ENCODE measurements at regions of chr10 and their contacts with region 1.

Region 1: DNA sequence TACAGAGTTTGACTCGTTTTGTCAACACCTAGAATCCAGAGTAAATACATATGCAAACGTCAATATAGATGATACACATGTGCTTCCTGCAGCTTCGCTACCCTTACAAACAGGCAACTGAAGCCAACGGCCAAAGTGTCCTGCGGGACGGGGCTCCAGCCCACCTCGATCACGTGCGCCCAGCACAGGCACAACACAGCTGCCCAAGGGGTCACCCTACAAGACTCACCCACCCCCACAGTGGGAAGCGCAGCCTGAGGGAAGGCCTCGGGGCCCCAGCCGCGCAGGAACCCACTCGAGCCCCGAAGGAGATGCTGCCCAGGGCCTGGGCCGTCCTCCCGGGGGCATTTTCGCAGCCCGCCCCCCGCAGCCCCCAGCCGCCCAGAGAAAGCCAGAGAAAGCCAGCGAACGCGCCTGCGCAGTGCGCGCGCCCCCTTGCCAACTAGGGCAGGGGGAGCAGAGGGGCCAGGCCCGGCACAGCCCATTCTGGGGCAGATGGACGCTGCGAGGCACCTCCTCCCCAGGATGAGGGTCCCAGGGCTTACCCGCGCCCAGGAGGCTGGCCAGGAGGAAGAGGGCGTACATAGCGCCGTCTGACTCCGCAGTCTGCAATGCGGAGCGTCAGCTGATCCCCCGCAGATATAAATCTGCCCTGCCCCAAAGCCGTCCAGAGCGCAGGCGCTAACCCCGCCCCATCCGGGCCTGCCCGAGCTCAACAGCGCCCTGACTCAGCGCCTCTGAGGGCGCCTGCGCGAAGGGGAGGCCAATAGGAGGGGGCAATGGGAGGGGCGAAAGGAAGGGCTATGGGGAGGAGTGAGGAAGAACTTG is at the start of gene PSAP:
- DNase-seq: peak; percentile 96 to 99 (median 97)
- ATAC-seq: peak; percentile 98
- H3K4me3 ChIP-seq: peak within 1 kb of the TSS; percentile 92
- H3K4me3 Mint-ChIP-seq: peak within 1 kb of the TSS; percentile 91 to 99 (median 96)
- H3K27ac ChIP-seq: peak within 1 kb of the TSS; percentile 79
- H3K27ac Mint-ChIP-seq: peak within 1 kb of the TSS; percentile 79 to 96 (median 86)
- H3K4me1 ChIP-seq: peaks cover 7 to 14% of the 10 kb centered on the region in 2 donors
- H3K4me1 Mint-ChIP-seq: peaks cover 34 to 51% (median 48%) of the 10 kb centered on the region in 7 donors
- H3K27me3 ChIP-seq: no peaks in the 10 kb centered on the region
- H3K27me3 Mint-ChIP-seq: no peaks in the 10 kb centered on the region
- total RNA-seq, gene PSAP: 153 to 1,163 (median 266) TPM

Region 2: GRCh38 chr10:71319042-71319799 is 531.6 kb before region 1 on chr10 and contains the start of gene SLC29A3:
- CTCF ChIA-PET with region 1: no interaction called
- POLR2A ChIA-PET with region 1: no interaction called
- intact Hi-C with region 1: loop called in 1 of 2 experiments (anchors 1 kb)
- DNase-seq: peak; percentile 45 to 85 (median 70)
- ATAC-seq: peak; percentile 91
- H3K4me3 ChIP-seq: peak within 1 kb of the TSS; percentile 81
- H3K4me3 Mint-ChIP-seq: peak within 1 kb of the TSS; percentile 85 to 97 (median 94)
- H3K27ac ChIP-seq: peak within 1 kb of the TSS; percentile 62
- H3K27ac Mint-ChIP-seq: peak within 1 kb of the TSS; percentile 71 to 94 (median 85)
- H3K4me1 ChIP-seq: peaks cover 5 to 10% of the 10 kb centered on the region in 2 donors
- H3K4me1 Mint-ChIP-seq: peaks cover 27 to 53% (median 40%) of the 10 kb centered on the region in 7 donors
- H3K27me3 ChIP-seq: no peaks in the 10 kb centered on the region
- H3K27me3 Mint-ChIP-seq: no peaks in the 10 kb centered on the region
- total RNA-seq, gene SLC29A3: 3.5 to 7.2 (median 5.1) TPM

Region 3: GRCh38 chr10:71748671-71749191 is 102.1 kb before region 1 on chr10:
- CTCF ChIA-PET with region 1: no interaction called
- POLR2A ChIA-PET with region 1: interaction called, 4 read pairs
- intact Hi-C with region 1: loop called in 1 of 2 experiments (anchors 2 kb)
- DNase-seq: peak; percentile 53 to 93 (median 88)
- ATAC-seq: peak; percentile 87
- H3K4me3 ChIP-seq: peak overlapping the region; percentile 40
- H3K4me3 Mint-ChIP-seq: peak overlapping the region; percentile 74 to 90 (median 85)
- H3K27ac ChIP-seq: peak overlapping the region; percentile 74
- H3K27ac Mint-ChIP-seq: peak overlapping the region; percentile 95 to 99 (median 98)
- H3K4me1 ChIP-seq: peaks cover 93 to 99% of the 10 kb centered on the region in 2 donors
- H3K4me1 Mint-ChIP-seq: peaks cover 80 to 98% (median 93%) of the 10 kb centered on the region in 7 donors
- H3K27me3 ChIP-seq: no peaks in the 10 kb centered on the region
- H3K27me3 Mint-ChIP-seq: no peaks in the 10 kb centered on the region

Region 4: GRCh38 chr10:71899665-71900412 is 49.0 kb after region 1 on chr10:
- CTCF ChIA-PET with region 1: interaction called, 3 read pairs
- POLR2A ChIA-PET with region 1: interaction called, 9 read pairs
- intact Hi-C with region 1: loop called in 1 of 2 experiments (anchors 5 kb)
- DNase-seq: no peak
- ATAC-seq: no peak
- H3K4me3 ChIP-seq: no peak overlapping the region
- H3K4me3 Mint-ChIP-seq: no peak overlapping the region
- H3K27ac ChIP-seq: no peak overlapping the region
- H3K27ac Mint-ChIP-seq: no peak overlapping the region
- H3K4me1 ChIP-seq: peaks cover 0 to 6% of the 10 kb centered on the region in 2 donors
- H3K4me1 Mint-ChIP-seq: peaks cover 0 to 17% (median 4%) of the 10 kb centered on the region in 7 donors
- H3K27me3 ChIP-seq: no peaks in the 10 kb centered on the region
- H3K27me3 Mint-ChIP-seq: peaks cover 0 to 3% (median 0%) of the 10 kb centered on the region in 5 donors

Region 5: GRCh38 chr10:71985542-71986250 is 134.8 kb after region 1 on chr10:
- CTCF ChIA-PET with region 1: no interaction called
- POLR2A ChIA-PET with region 1: no interaction called
- intact Hi-C with region 1: no loop called
- DNase-seq: no peak
- ATAC-seq: peak; percentile 50
- H3K4me3 ChIP-seq: no peak overlapping the region
- H3K4me3 Mint-ChIP-seq: no peak overlapping the region
- H3K27ac ChIP-seq: no peak overlapping the region
- H3K27ac Mint-ChIP-seq: peak overlapping the region in 1 of 9 donors; percentile 11
- H3K4me1 ChIP-seq: no peaks in the 10 kb centered on the region
- H3K4me1 Mint-ChIP-seq: peaks cover 0 to 13% (median 0%) of the 10 kb centered on the region in 7 donors
- H3K27me3 ChIP-seq: no peaks in the 10 kb centered on the region
- H3K27me3 Mint-ChIP-seq: peaks cover 0 to 8% (median 0%) of the 10 kb centered on the region in 5 donors

Region 6: DNA sequence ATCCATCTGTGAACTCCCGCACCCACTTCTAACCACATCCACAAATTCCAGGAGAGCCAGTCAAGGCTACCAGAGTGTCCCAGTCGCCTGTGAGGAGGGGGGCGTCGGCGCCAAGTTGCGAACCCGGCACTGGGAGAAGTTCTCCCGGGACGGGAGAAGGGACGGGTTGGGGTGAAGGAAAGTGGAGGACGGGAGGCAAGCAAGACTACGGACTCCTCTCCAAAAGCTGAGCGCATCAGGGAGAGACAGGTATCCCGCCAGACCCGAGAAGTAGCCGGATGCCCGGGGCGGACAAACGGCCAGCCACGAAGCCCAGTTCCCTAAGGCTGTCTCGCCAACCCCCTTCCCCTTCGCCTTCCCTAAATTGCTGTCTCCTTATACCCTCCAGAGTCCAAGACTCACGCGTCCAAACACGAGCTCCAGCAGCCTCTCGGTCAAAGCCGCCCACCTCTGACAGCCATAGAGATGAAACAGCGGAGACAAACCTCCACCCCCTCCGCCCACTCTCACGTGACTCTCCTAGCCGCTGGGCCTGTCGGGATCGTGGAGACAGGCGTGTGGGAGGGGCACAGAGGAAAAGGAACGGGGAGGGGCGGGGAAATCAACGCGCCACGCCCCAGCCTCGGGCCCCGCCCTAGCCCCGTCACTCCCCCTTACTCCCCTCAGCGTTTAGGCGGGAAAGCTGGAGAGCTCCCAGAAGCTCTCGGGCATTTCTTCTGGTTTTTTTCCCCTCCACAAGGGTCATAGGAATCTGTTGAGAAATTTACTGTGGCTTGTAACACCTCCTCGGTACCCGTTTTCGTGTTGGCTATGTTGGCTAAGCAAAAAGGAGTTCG is 775.0 kb after region 1 on chr10 and contains the start of gene MICU1:
- CTCF ChIA-PET with region 1: no interaction called
- POLR2A ChIA-PET with region 1: no interaction called
- intact Hi-C with region 1: loop called in 1 of 2 experiments (anchors 1 kb)
- DNase-seq: peak; percentile 74 to 93 (median 90)
- ATAC-seq: peak; percentile 100
- H3K4me3 ChIP-seq: peak within 1 kb of the TSS; percentile 97
- H3K4me3 Mint-ChIP-seq: peak within 1 kb of the TSS; percentile 97 to 100 (median 100)
- H3K27ac ChIP-seq: peak within 1 kb of the TSS; percentile 76
- H3K27ac Mint-ChIP-seq: peak within 1 kb of the TSS; percentile 83 to 99 (median 97)
- H3K4me1 ChIP-seq: peaks cover 11 to 16% of the 10 kb centered on the region in 2 donors
- H3K4me1 Mint-ChIP-seq: peaks cover 11 to 28% (median 16%) of the 10 kb centered on the region in 7 donors
- H3K27me3 ChIP-seq: no peaks in the 10 kb centered on the region
- H3K27me3 Mint-ChIP-seq: peaks cover 0 to 8% (median 0%) of the 10 kb centered on the region in 5 donors
- total RNA-seq, gene MICU1: 20.8 to 39.6 (median 26.3) TPM

Measured in naive thymus-derived CD4-positive, alpha-beta T cell (primary cell).